ENCODE measurements at regions of chr4 and their contacts with region 1.

Region 1: DNA sequence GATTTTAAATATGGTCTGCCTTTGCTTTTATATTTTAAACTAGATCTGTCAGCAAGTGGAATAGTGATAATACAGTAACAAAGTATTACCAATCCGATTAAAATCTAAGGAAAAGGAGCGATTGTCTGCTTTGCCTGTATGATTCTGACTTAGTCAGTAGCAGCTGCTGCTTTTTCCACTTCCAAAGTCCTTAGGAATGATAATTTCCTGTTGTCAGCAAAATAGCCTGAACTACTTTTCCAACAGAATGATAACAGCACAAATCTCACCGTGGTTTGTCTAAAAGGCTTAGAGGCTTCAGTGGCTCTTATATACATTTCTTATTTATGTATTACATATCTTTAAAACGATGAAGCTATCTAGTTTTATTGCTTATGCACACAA is 290.0 kb downstream of the ANK2 start:
- DNase-seq: no peak

Region 2: DNA sequence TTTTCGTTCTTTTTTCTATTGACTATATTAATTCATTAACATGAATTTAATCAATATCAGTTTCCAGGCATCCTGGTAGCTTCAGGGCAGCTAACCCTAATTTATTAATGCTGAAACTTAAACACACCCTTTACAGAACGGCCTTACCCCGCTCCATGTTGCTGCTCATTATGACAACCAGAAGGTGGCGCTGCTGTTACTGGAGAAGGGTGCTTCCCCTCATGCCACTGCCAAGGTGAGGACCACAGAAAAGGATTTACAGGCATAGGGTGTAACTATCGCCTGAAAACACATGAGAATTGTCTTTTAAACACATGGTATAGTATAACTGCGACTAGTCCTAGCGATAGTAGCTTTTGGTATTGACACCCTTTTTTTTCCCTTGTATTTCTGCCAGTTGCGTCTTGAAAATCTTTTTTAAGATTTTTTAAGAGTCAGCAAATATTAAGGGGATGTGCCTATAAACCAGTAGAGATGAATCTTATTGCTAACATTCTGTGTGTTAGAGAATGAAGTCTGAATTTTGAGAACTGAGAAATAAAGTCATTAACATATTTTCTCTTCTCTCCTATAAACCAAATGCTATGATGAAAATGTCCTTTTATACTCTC is 61.0 kb before region 1 on chr4:
- intact Hi-C with region 1: no loop called
- DNase-seq: no peak

Region 3: DNA sequence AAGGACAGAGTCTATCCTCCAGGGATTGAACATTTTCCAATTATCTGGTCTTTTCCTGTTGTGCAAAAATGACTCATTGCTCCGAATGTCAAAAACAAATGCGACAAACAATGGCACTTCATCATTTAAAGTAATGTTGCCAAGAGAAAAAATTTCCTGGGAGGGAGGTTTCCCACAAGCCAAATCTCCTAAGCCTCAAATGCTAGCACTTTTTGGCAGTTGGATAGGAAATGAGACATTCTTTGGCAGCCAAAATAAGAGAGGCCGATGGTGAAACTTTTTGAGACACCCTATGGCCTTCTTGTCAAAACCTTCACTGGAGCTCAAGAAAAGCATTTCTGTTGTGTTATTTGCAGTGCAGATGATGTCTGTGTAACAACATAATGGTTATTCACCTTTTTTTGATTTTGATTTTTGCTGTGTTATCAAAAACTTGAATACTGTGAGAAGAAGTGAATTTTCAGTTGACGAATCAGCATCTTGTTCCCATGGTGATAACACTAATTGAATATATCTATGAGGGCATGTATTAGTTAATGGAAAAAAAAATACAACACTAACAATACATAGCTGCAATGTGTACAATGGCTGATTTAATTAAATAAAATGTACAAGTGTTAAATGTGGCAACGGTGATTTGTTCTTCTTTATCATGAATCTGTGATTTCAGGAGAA is 43.8 kb after region 1 on chr4:
- intact Hi-C with region 1: loop called (anchors 5 kb)
- DNase-seq: no peak

Region 4: GRCh38 chr4:114052227-114052626 is 712.8 kb after region 1 on chr4:
- intact Hi-C with region 1: no loop called
- DNase-seq: no peak

Measured in cardiac septum (tissue), 1 donor.